Activated T-helper 1 cell treated with anti-CD3 and anti-CD28 coated beads, Interleukin-12 subunit alpha, Interleukin-12 subunit beta, Interleukin-2, Interleukin-4 antibody, amounts not matched to agents 30 ng/mL and 10 ng/mL and 1 ng/mL, durations not matched to agents 14 hours and 24 hours and 36 hours (primary cell): ENCODE measurements at regions of chr16 and their contacts with region 1.

Region 1: DNA sequence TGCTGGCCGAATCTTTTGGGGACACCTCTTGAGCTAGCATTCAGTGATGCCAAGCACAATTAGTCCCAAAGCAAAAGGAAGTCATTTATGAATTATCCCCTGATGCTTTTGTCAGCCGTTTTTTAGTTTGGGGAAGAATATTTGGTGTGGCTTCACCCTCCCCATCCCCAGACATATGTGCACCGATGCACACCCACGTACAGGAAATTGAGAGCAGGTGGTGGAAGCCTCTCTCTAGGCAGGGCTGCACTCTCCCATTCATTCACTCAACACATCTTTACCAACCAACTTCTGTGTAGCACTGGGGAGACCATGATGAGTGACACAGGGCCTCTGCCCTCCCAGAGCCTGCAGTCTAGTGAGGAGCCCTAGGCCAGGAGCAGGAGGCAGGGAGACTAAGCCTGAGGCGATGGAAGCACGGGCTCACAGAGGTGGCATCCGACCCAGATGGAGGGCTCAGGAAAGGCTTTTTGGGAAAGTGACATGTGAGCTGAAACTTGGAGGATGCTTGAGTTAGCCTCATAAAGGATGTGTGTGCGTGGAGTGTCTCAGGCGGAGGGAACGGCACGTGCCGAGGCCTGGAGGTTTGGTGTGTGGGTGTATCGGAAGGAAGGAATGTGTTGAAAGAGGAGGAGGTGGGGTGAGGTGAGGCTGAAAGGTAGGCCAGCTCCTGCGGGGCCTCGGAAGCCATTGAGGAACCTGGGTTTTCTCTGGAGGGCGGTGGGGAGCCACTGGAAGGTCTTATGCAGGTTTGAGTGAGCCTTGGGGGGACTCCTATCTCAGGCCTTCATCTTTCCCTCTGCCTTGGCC is 43.8 kb downstream of the PSME3IP1 start:
- DNase-seq: no peak
- H3K4me3 Mint-ChIP-seq: peak overlapping the region; percentile 63
- H3K27ac Mint-ChIP-seq: peak overlapping the region; percentile 84
- H3K4me1 Mint-ChIP-seq: peaks cover 32% of the 10 kb centered on the region
- H3K27me3 Mint-ChIP-seq: no peaks in the 10 kb centered on the region

Region 2: DNA sequence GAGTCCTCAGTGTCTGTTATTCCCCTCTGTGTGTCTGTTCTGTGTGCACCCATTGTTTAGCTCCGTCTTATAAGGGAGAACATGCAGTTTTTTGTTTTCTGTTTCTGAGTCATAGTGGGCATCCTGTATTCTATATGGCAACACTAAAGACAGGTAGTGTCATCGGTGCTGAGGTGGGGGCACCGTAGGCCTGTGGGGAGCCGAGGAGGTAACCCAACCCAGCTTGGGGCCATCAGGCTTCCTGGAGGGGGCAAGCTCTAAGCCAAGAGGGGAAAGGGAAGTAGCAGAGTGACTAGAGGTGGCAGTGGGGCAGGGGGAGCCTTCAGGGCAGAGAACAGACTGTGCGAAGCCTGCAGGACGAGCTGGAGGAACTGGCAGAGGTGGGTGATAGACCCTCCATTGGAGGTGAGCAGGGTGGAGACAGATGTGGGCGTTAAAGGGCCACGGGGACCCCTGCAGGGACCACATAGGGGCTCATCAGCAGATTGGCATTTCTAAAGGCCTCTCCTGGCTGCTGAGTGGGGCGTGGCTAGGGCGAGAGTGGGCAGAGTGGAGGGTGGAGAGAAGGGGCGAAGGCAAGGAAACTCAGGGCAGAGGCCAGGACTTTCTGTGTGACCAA is 13.1 kb before region 1 on chr16:
- intact Hi-C with region 1: loop called (anchors 2 kb)
- DNase-seq: peak; percentile 44
- H3K4me3 Mint-ChIP-seq: no peak overlapping the region
- H3K27ac Mint-ChIP-seq: peak overlapping the region; percentile 91
- H3K4me1 Mint-ChIP-seq: peaks cover 64% of the 10 kb centered on the region
- H3K27me3 Mint-ChIP-seq: no peaks in the 10 kb centered on the region

Region 3: DNA sequence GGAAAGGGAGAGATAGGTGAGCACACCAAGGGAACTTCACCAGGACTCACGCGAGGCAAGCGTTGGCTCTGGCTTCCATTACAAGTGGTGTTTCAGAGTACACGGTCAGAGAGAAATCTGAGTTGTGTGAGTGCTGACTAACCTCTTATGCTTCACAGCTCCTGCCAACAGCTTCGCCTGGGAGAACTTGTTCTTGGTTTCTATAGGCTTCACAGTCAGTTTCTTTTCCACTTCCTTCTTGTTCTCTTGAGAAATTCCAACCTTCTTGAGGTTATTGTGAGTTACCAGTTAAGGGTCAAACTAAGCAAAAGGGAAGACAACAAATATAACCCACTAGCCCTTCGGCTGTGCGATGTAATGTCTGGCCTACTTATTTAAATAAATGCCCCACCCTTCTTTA is 24.9 kb after region 1 on chr16:
- intact Hi-C with region 1: no loop called
- DNase-seq: no peak
- H3K4me3 Mint-ChIP-seq: no peak overlapping the region
- H3K27ac Mint-ChIP-seq: no peak overlapping the region
- H3K4me1 Mint-ChIP-seq: no peaks in the 10 kb centered on the region
- H3K27me3 Mint-ChIP-seq: no peaks in the 10 kb centered on the region